Endothelial cell of umbilical vein (primary cell): ENCODE measurements at regions of chr10 and their contacts with region 1.

Region 1: GRCh38 chr10:97025613-97026242 is 160.0 kb downstream of the SLIT1 start:
- DNase-seq: peak; percentile 34
- H3K4me3 ChIP-seq: no peak overlapping the region
- H3K27ac ChIP-seq: no peak overlapping the region
- H3K4me1 ChIP-seq: peaks cover 18% of the 10 kb centered on the region
- H3K27me3 ChIP-seq: no peaks in the 10 kb centered on the region
- CTCF ChIP-seq: peak; percentile 58 to 63
- POLR2A ChIP-seq: no peak

Region 2: GRCh38 chr10:96642973-96643372 is 382.8 kb before region 1 on chr10:
- CTCF ChIA-PET with region 1: interaction called, 53 read pairs
- POLR2A ChIA-PET with region 1: no interaction called
- dilution Hi-C with region 1: no loop called
- intact Hi-C with region 1: loop called (anchors 2 kb)
- DNase-seq: no peak
- H3K4me3 ChIP-seq: no peak overlapping the region
- H3K27ac ChIP-seq: no peak overlapping the region
- H3K4me1 ChIP-seq: no peaks in the 10 kb centered on the region
- H3K27me3 ChIP-seq: peaks cover 0 to 6% of the 10 kb centered on the region in 2 experiments
- CTCF ChIP-seq: peak; percentile 12 to 24
- POLR2A ChIP-seq: no peak

Region 3: GRCh38 chr10:96789571-96790108 is 236.1 kb before region 1 on chr10:
- CTCF ChIA-PET with region 1: no interaction called
- POLR2A ChIA-PET with region 1: no interaction called
- dilution Hi-C with region 1: no loop called
- intact Hi-C with region 1: loop called (anchors 1 kb)
- DNase-seq: peak; percentile 14
- H3K4me3 ChIP-seq: no peak overlapping the region
- H3K27ac ChIP-seq: no peak overlapping the region
- H3K4me1 ChIP-seq: no peaks in the 10 kb centered on the region
- H3K27me3 ChIP-seq: peaks cover 0 to 2% of the 10 kb centered on the region in 2 experiments
- CTCF ChIP-seq: peak in 1 of 2 donors; percentile 81
- POLR2A ChIP-seq: no peak

Region 4: GRCh38 chr10:96910488-96911395 is 115.0 kb before region 1 on chr10:
- CTCF ChIA-PET with region 1: interaction called, 13 read pairs
- POLR2A ChIA-PET with region 1: no interaction called
- dilution Hi-C with region 1: no loop called
- intact Hi-C with region 1: loop called (anchors 1 kb)
- DNase-seq: peak; percentile 64
- H3K4me3 ChIP-seq: no peak overlapping the region
- H3K27ac ChIP-seq: no peak overlapping the region
- H3K4me1 ChIP-seq: no peaks in the 10 kb centered on the region
- H3K27me3 ChIP-seq: no peaks in the 10 kb centered on the region
- CTCF ChIP-seq: peak; percentile 40 to 42
- POLR2A ChIP-seq: no peak

Region 5: DNA sequence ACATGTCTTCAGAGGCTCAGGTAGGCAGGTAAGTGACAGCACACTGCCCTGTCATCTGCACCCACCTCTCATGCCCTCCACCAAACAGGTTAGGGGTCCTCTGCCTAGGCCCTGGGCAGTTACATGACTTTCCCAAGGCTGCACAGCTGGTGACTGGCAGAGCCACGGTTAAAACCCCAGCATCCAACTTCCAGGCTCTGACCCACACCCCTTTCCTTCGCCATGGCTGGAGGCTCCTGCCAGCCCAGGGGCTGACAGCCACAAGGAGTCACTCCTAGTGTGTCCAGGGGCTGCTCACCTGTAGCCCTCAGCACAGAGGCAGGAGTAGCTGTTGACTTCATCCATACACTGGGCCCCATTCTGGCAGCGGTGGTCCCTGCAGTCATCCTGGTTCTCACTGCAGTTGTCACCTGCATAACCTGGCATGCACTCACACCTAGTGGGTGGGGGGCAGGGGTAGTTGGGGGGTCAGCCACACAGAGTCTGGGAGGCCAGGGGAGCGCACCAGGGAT is 15.0 kb before region 1 on chr10:
- CTCF ChIA-PET with region 1: interaction called, 22 read pairs
- POLR2A ChIA-PET with region 1: no interaction called
- dilution Hi-C with region 1: no loop called
- intact Hi-C with region 1: no loop called
- DNase-seq: no peak
- H3K4me3 ChIP-seq: no peak overlapping the region
- H3K27ac ChIP-seq: no peak overlapping the region
- H3K4me1 ChIP-seq: no peaks in the 10 kb centered on the region
- H3K27me3 ChIP-seq: no peaks in the 10 kb centered on the region
- CTCF ChIP-seq: no peak
- POLR2A ChIP-seq: no peak

Region 6: DNA sequence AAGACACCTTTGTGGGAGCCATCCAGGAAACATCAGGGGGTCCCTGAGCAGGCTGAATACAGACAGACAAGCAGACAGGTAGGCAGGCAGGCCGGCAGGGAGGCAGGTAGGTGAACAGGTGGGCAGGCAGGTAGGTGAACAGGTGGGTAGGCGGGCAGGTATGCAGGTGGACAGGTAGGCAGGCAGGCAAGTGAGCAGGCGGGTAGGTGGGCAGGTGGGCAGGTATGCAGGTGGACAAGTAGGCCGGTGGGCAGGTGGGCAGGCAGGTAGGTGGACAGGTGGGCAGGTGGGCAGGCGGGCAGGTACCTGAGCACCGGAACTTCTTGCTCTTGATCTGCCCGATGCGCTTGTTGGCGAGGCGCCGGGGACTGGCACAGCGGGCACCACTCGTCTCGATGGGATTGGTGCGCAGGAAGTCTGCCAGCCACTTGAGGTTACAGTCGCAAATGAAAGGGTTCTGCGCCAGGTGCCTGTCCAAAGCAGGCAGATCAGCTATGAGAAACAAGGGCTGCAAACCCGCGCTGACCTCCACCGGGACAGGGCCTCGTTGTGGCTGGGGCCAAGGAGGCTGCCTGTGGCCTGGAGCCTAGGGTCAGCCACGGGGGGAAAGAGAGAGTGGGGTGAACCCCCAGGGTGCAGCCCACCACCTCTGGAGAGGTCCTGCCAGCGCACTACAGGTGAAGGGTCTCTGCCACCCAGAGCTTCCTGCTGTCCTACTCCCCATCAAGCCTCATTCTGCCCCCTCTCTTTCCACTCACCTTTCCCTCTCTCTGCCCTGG is 23.1 kb after region 1 on chr10:
- CTCF ChIA-PET with region 1: interaction called, 10 read pairs
- POLR2A ChIA-PET with region 1: no interaction called
- dilution Hi-C with region 1: no loop called
- intact Hi-C with region 1: no loop called
- DNase-seq: no peak
- H3K4me3 ChIP-seq: no peak overlapping the region
- H3K27ac ChIP-seq: no peak overlapping the region
- H3K4me1 ChIP-seq: no peaks in the 10 kb centered on the region
- H3K27me3 ChIP-seq: peaks cover 0 to 2% of the 10 kb centered on the region in 2 experiments
- CTCF ChIP-seq: no peak
- POLR2A ChIP-seq: no peak

Region 7: DNA sequence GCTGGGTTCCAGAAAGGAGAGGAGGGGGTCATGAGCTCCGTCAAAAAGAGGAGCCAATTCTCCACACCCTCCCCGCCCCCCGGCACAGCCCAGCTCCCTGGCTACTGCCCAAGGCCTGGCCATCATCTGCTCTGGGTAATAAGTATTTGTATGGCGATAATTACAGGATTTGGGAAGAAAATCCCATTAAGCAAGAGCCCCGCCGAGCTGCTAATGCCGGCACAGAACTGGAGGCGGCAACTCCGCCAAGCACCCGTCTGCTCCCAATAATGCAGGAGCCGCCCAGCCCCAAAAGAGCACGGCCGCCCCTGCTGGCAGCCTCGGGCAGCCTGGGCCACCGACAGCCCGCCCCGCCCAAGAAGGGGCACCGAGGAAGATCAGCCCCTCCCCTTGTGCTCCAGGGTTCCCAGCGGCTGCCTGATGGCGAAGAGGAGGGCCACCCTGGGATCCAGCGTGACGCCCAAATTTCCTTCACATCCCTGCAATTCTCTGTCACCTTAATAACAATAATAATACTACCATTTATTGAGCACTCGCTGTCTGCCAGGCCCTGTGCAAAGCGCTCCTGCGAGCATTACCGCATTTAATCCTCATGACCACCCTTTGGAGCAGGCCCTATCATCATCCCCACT is 154.1 kb after region 1 on chr10:
- CTCF ChIA-PET with region 1: no interaction called
- POLR2A ChIA-PET with region 1: no interaction called
- dilution Hi-C with region 1: no loop called
- intact Hi-C with region 1: no loop called
- DNase-seq: no peak
- H3K4me3 ChIP-seq: no peak overlapping the region
- H3K27ac ChIP-seq: no peak overlapping the region
- H3K4me1 ChIP-seq: no peaks in the 10 kb centered on the region
- H3K27me3 ChIP-seq: peaks cover 27 to 44% of the 10 kb centered on the region in 2 experiments
- CTCF ChIP-seq: no peak
- POLR2A ChIP-seq: no peak